Activated CD4-positive, alpha-beta T cell treated with anti-CD3 and anti-CD28 coated beads, Interleukin-2, amount 10 ng/mL, durations not matched to agents 24 days and 14 days (primary cell): ENCODE measurements at regions of chr4 and their contacts with region 1.

Region 1: DNA sequence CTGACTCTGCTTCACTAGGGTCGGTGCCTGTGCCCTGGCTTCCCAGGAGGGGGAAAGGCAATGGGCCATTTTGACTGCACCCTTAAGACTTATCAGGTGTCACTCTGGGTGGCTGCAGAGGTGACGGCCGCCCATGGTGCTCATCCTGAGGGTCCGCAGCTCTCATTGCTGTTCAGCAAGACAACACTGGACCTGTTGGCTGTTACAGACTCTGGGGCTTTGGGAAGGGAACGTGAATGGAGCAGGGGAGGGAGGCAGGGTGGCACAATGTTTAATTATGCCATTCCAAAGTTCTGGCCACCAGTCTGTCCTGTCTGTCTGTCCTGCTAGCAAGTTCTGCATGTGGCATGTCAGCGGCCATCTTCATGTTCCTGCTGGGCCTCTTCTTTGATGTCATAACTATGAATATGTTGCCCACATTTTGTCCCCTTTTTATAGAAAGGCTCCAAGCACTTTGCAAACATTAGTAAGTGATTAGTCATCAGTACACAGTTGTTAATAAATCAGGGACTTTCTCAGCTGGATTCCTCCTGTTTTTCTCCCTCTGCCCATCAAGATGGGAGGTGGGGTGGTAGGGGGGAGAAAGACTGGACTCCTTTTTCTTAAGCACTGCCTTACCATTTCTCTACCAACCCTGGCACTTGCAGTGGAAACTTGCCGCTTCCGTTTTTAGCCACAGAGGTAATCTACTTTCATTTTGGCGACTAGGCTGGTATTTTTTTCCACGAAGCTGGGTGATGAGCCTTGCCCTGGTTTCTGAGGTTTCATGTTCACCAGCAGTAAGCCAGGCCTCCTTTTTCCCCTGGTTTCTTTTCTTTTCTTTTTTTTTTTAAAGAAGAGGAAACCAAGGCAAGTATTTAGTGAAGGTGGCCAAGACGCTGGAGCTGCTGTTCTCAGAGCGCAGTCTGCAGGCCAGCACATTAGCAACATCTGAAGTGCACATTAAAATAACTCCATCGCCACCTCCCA is 88.6 kb upstream of the TRIM2 start:
- DNase-seq: peak; percentile 92
- H3K4me3 Mint-ChIP-seq: no peak overlapping the region
- H3K27ac Mint-ChIP-seq: no peak overlapping the region
- H3K4me1 Mint-ChIP-seq: peaks cover 9% of the 10 kb centered on the region
- H3K27me3 Mint-ChIP-seq: peaks cover 5% of the 10 kb centered on the region

Region 2: DNA sequence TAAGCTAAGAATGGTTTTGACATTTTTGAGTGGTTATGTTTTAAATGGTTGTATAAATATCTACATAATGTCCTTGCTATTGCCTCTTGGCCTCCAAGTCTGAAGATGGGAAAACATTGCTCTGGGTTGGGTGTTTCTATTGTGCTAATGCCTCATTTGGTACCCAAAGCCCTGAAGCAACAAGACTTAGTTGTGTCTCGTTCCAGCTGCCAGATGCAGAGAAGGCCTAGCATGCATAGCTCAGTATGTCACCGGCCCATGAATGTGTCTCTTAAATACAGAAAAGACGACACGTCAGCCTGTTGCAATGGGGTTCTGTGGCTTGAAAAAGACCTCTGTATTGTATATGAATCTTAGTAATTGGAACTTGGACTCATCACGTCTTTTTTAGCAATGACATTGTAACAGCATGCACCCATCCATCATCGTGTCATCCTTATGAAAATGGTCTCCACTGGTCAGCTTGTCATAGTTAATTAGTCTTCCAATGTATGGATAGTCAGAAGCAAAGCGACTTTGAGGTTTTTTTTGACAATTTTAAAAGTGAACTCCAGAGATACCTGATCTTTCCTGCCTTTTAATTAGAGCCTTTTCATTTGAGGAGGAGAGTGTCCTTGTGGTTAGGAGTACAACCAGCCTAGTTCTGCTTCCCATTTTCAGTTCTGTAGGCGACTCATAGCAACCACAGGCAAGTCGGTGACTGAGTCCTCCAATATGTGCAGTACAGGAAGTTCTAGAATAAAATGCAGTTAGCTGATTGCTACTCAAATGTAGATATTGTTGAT is 1228.4 kb before region 1 on chr4:
- intact Hi-C with region 1: loop called (anchors 10 kb)
- DNase-seq: no peak
- H3K4me3 Mint-ChIP-seq: no peak overlapping the region
- H3K27ac Mint-ChIP-seq: peak overlapping the region; percentile 57
- H3K4me1 Mint-ChIP-seq: peaks cover 28% of the 10 kb centered on the region
- H3K27me3 Mint-ChIP-seq: no peaks in the 10 kb centered on the region

Region 3: DNA sequence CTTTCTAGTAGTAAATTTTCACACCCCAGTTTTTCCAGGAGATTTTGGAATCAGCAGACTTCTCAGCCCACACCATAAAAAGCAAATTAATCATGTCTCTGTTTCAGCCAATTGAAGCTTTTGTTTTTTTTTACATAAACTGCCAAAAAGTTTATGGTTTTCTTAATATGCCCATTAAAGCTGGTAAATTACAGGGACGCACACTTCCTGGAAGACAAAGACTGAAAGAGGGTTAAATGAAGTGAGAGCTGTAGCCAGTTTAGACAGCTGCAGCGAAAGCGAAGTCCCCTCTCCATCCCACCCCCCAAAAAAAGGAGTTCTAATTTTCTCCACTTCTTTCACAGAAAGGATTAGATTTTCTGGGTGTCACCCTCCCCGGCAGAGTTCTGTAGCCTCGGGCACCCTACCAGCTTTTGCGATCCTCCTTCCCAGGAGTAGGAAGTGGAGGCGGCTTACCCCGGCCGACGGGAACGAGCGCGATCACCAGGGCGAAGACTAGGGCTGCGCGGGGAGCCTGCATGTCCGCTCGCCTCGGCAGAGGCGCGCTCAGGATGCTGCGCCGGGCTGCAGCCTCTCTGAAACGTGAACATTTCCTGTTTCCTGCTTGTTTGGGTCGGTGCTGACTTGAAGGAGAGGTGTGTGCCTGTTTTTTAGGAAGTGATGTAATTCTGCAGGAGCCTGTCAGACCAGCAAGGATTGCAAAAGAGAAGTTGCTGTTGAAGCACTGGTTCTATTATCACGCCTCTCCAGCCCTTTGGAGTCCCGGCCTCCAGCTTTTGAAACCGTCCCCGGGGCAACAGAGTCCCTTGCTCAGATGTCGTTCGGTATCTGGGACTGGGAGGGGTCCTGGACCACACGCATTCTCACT is 436.0 kb before region 1 on chr4 and contains the start of gene TMEM154:
- intact Hi-C with region 1: loop called (anchors 10 kb)
- DNase-seq: peak; percentile 94
- H3K4me3 Mint-ChIP-seq: peak within 1 kb of the TSS; percentile 87
- H3K27ac Mint-ChIP-seq: peak within 1 kb of the TSS; percentile 88
- H3K4me1 Mint-ChIP-seq: peaks cover 58% of the 10 kb centered on the region
- H3K27me3 Mint-ChIP-seq: no peaks in the 10 kb centered on the region
- total RNA-seq, gene TMEM154: 7.9 and 9.0 TPM in 2 replicates

Region 4: GRCh38 chr4:152956650-152957436 is 158.8 kb before region 1 on chr4:
- intact Hi-C with region 1: no loop called
- DNase-seq: no peak
- H3K4me3 Mint-ChIP-seq: no peak overlapping the region
- H3K27ac Mint-ChIP-seq: no peak overlapping the region
- H3K4me1 Mint-ChIP-seq: no peaks in the 10 kb centered on the region
- H3K27me3 Mint-ChIP-seq: peaks cover 8% of the 10 kb centered on the region

Region 5: DNA sequence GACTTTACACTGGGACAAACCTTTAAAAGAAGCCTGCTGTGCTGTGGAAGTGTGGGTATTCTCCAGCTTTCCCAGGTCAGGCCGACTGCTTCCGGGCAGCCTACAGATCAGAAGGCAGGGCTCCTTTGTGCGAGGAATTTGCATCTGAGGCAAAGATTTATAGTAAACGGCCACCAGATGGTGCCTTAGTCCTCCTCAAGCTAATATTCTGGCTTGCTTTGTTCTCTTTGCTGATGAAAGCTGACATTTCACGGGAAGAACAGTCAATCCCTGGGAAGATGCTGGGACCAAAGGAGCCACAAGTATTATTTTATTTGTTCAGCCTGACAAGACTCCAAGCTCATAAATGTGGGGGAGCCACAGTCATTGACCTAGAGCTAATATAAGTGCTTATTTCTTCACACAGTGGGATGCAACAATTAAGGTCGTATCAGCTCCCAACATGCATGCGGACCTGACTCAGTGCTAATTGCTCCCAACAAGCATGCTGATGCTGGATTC is 32.1 kb before region 1 on chr4:
- intact Hi-C with region 1: loop called (anchors 1 kb)
- DNase-seq: peak; percentile 82
- H3K4me3 Mint-ChIP-seq: peak overlapping the region; percentile 24
- H3K27ac Mint-ChIP-seq: no peak overlapping the region
- H3K4me1 Mint-ChIP-seq: peaks cover 17% of the 10 kb centered on the region
- H3K27me3 Mint-ChIP-seq: peaks cover 25% of the 10 kb centered on the region

Region 6: DNA sequence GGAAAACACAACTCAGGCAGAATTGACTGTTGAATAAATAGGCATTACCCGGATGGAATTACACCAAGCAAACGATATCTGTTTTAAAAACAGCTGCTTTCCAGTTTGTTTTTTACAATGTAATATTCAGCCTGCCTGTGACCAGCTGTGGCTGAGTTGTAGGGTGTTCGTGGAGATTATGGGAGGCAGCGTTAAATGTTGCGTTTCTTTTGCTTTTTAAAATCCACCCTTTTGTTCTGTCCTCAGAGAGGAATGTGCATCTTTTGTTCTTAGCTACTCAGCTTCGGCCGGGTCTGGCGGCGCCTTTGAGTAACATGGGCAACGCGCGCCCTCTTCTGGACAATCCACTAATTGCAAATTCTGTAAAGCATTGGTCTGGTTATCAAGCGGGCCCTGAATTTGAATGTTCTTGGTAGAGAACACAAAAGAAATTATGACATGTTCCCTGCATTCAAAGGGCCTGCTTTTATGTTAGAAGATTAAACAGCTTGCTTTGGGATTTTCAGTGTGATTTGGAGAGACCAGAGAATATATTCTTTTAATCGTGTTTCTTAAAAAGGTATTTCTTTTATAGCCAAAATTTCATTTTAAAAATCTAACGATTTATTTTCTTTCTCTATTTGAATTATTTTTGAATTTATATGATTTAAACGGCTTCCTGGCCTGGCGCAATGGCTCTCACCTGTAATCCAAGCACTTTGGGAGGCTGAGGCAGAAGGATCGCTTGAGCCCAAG is 12.3 kb after region 1 on chr4:
- intact Hi-C with region 1: loop called (anchors 1 kb)
- DNase-seq: peak; percentile 95
- H3K4me3 Mint-ChIP-seq: no peak overlapping the region
- H3K27ac Mint-ChIP-seq: no peak overlapping the region
- H3K4me1 Mint-ChIP-seq: peaks cover 1% of the 10 kb centered on the region
- H3K27me3 Mint-ChIP-seq: peaks cover 24% of the 10 kb centered on the region

Region 7: DNA sequence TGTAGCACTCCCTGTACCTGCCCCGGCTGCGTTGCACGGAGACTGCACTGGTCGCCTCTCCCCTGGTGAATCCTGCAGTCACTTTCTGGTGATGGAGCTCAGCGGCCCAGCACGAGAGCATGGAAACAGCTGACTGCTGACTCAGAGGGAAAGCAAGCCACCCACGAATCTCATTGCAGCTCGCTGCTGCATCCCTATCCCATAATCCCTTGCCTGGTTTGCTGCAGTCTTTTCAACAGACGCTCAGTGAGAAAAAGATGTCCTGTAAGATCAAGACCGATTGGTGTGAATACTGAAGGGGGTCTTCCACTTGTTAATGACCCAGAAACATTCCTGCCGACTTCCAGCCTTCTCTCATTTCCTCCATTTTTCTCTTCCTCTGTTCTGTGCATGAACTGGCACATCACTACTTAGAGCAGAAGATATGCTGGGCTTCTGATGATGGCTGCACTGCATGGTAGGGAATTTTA is 141.6 kb after region 1 on chr4:
- intact Hi-C with region 1: no loop called
- DNase-seq: peak; percentile 73
- H3K4me3 Mint-ChIP-seq: no peak overlapping the region
- H3K27ac Mint-ChIP-seq: no peak overlapping the region
- H3K4me1 Mint-ChIP-seq: no peaks in the 10 kb centered on the region
- H3K27me3 Mint-ChIP-seq: peaks cover 27% of the 10 kb centered on the region